Posterior cingulate gyrus (tissue), 11 donors: ENCODE measurements at regions of chr4 and their contacts with region 1.

Region 1: DNA sequence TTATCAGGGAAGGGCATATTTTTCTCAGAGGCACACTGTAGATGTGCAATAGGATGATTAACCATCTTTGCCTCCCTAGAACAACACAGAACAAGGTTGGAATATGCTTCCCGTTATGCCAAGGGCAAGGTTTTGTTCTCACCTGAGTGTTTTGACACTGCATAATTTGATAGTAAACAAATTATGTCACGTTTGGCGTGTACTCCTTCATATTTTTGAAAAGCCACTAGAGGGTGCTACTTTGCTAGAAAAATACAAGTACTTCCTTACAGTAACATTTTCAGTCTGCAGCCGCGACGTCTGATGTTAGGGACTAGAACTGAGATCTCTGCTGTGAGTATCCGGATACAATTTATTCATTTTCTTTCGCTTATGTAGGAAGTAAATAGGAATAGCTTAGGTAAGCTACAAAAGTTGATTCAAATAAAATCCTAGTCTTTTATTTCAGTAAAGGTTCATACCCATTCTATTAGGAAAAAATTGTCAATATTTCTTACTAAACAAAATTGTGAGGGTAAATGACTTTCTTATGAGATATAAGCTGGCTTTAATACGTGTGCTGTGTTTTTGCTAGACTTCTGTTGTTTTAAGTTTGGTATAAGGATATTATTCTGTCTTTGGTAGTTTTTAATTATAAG is 181.1 kb upstream of the WDFY3 start:
- DNase-seq: peak in 8 of 10 donors; percentile 27 to 84 (median 56)

Region 2: GRCh38 chr4:85370430-85371032 is 223.0 kb after region 1 on chr4:
- intact Hi-C with region 1: loop called (anchors 1 kb)
- DNase-seq: peak in 4 of 10 donors; percentile 3 to 24 (median 10)

Region 3: GRCh38 chr4:85747882-85748491 is 600.4 kb after region 1 on chr4:
- intact Hi-C with region 1: loop called (anchors 1 kb)
- DNase-seq: peak in 2 of 10 donors; percentile 39 to 53

Region 4: GRCh38 chr4:85798012-85798770 is 650.6 kb after region 1 on chr4:
- intact Hi-C with region 1: loop called (anchors 5 kb)
- DNase-seq: no peak

Region 5: GRCh38 chr4:86043755-86044592 is 896.4 kb after region 1 on chr4:
- intact Hi-C with region 1: loop called (anchors 10 kb)
- DNase-seq: peak in 1 of 10 donors; percentile 21